Activated CD4-positive, alpha-beta memory T cell treated with anti-CD3 and anti-CD28 coated beads for 36 hours (primary cell): ENCODE measurements at regions of chr19 and their contacts with region 1.

Region 1: GRCh38 chr19:2610637-2611482 is 91.6 kb downstream of the GNG7 start:
- DNase-seq: peak; percentile 92
- H3K4me3 Mint-ChIP-seq: peak overlapping the region; percentile 78
- H3K27ac Mint-ChIP-seq: no peak overlapping the region
- H3K4me1 Mint-ChIP-seq: peaks cover 41% of the 10 kb centered on the region
- H3K27me3 Mint-ChIP-seq: peaks cover 17% of the 10 kb centered on the region

Region 2: DNA sequence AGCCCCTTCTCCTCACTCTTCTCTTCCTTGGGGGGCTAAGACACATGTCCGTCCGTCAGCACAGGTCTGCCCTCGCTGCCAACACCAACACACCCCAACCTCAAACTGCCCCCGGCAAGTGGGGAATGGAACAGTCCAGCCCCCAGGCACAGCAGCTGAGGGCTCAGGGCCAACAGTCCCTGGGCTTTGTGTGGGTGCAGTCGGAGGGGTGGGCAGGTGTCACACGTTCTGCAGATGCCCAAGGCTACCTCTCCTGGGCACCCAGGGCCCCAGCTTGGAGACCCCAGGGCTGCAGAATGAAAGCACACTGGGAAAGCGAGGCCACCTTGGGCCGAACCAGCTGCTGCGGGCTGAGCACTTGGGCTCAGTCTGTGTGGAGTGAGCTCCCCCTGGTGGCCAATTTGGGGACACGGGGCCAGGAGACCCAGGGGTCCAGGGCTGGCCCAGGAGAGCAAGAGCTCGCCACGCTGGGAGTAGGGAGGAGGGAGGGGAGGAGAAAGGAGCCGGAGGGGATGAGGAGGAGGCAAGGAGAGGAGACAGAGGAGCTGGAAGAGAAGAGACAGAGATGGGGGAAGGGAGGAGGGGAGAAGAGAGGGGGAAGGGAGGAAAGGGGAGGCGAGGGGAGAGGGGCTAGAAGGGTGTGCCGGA is 784.8 kb before region 1 on chr19:
- CTCF ChIA-PET with region 1: no interaction called
- POLR2A ChIA-PET with region 1: no interaction called
- intact Hi-C with region 1: no loop called
- DNase-seq: peak; percentile 79
- H3K4me3 Mint-ChIP-seq: no peak overlapping the region
- H3K27ac Mint-ChIP-seq: no peak overlapping the region
- H3K4me1 Mint-ChIP-seq: no peaks in the 10 kb centered on the region
- H3K27me3 Mint-ChIP-seq: no peaks in the 10 kb centered on the region

Region 3: GRCh38 chr19:2427429-2428320 is 183.2 kb before region 1 on chr19 and contains the start of gene TIMM13:
- CTCF ChIA-PET with region 1: interaction called, 12 read pairs
- POLR2A ChIA-PET with region 1: interaction called, 3 read pairs
- intact Hi-C with region 1: no loop called
- DNase-seq: peak; percentile 97
- H3K4me3 Mint-ChIP-seq: peak within 1 kb of the TSS; percentile 90
- H3K27ac Mint-ChIP-seq: peak within 1 kb of the TSS; percentile 97
- H3K4me1 Mint-ChIP-seq: peaks cover 15% of the 10 kb centered on the region
- H3K27me3 Mint-ChIP-seq: no peaks in the 10 kb centered on the region
- total RNA-seq, gene TIMM13: 69.0 to 72.0 TPM

Region 4: GRCh38 chr19:2461751-2462634 is 148.9 kb before region 1 on chr19:
- CTCF ChIA-PET with region 1: interaction called, 13 read pairs
- POLR2A ChIA-PET with region 1: no interaction called
- intact Hi-C with region 1: no loop called
- DNase-seq: peak; percentile 81
- H3K4me3 Mint-ChIP-seq: peak overlapping the region; percentile 92
- H3K27ac Mint-ChIP-seq: peak overlapping the region; percentile 68
- H3K4me1 Mint-ChIP-seq: peaks cover 7% of the 10 kb centered on the region
- H3K27me3 Mint-ChIP-seq: no peaks in the 10 kb centered on the region

Region 5: DNA sequence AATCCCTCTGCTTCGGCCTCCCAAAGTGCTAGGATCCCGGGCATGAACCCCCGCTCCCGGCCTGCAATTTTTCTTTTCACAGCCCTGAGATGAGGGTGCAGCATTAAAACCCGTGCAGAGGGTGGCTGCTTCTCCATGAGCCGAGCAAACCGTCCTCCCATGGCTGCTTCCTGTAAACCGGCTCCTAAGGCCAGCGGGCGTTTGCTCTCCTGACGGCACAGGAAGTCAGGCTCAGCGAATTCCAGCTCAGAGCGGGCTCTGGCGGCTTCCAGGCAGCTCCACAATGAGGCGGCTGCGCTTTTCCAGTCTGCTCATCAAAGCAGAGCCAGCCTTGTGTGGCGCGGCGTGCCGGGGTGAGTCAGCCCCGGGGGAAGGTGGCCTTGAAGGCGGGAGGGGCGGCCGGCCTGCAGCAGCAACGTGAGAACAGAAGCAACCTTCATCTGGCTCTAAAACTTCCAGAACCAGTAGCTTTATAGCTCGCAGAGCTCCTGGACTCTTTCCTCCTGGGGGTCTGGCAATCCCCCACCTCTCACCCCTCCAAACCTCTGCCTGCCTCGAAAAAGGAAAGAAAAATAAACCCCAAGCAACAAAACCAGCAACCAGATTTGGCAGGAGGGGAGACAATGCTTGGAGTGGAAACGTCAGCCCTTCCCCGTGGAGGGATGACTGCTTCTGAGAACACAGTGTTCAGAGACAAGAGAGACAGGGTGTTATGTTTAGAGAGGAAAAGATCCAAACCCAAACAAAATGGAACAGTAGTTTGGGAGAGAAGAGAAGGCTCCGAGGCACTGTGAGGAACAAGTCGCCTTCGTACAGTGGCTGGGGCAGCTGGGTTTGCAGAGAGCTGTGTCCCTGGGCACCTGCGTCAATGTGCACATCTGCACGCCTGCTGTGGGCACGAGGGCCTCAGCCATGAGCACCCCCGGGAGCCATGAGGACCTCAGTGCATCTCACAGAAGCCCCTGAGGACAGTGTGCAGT is 67.1 kb before region 1 on chr19:
- CTCF ChIA-PET with region 1: interaction called, 7 read pairs
- POLR2A ChIA-PET with region 1: no interaction called
- intact Hi-C with region 1: loop called (anchors 5 kb)
- DNase-seq: peak; percentile 85
- H3K4me3 Mint-ChIP-seq: peak overlapping the region; percentile 52
- H3K27ac Mint-ChIP-seq: no peak overlapping the region
- H3K4me1 Mint-ChIP-seq: peaks cover 12% of the 10 kb centered on the region
- H3K27me3 Mint-ChIP-seq: peaks cover 1% of the 10 kb centered on the region

Region 6: DNA sequence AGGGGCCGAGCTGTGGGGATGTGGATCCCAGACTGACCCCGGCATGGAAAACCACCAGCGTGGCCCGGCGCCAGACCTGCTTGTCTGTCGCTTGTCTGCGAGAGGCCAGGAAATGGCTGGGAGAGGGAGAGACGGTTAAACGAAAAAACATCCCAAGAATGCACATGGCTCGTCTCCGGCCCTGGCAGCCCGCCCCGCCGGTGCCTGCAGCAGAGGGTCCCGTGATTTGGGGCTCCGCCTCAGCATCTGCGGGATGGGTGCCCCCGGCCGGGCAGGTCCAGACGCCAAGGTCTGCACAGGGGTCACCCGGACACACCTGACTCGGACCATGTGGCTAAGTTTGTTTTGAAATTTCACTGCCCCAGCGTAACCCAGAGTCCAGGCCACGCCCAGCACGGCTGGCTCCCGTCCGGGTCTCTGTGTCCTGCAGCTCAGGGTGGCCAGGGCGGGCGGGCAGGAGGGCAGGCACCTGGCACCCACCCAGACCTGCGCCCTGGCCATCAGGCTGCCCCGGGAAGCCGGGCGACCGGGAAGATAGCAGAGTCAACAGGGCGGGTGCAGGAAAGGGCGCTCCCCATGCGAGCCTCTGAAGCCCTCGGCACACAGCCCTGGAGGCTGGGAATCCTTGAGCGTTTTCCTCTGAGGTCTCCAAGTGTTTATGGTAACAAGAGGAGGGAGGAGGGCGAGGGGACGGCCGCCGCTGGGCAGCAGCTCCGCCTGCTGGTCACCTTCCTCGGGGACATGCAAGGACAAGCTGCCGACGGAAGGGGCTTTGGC is 31.8 kb before region 1 on chr19:
- CTCF ChIA-PET with region 1: interaction called, 27 read pairs
- POLR2A ChIA-PET with region 1: no interaction called
- intact Hi-C with region 1: loop called (anchors 5 kb)
- DNase-seq: peak; percentile 80
- H3K4me3 Mint-ChIP-seq: peak overlapping the region; percentile 12
- H3K27ac Mint-ChIP-seq: no peak overlapping the region
- H3K4me1 Mint-ChIP-seq: no peaks in the 10 kb centered on the region
- H3K27me3 Mint-ChIP-seq: peaks cover 13% of the 10 kb centered on the region

Region 7: GRCh38 chr19:2636897-2637683 is 26.2 kb after region 1 on chr19:
- CTCF ChIA-PET with region 1: interaction called, 31 read pairs
- POLR2A ChIA-PET with region 1: no interaction called
- intact Hi-C with region 1: loop called (anchors 2 kb)
- DNase-seq: peak; percentile 82
- H3K4me3 Mint-ChIP-seq: no peak overlapping the region
- H3K27ac Mint-ChIP-seq: no peak overlapping the region
- H3K4me1 Mint-ChIP-seq: peaks cover 5% of the 10 kb centered on the region
- H3K27me3 Mint-ChIP-seq: no peaks in the 10 kb centered on the region